ENCODE measurements at regions of chr5 and their contacts with region 1.

Region 1: GRCh38 chr5:173001229-173001841 is 17.8 kb downstream of the ATP6V0E1 start:
- DNase-seq: no peak

Region 2: GRCh38 chr5:172364773-172365172 is 636.6 kb before region 1 on chr5:
- intact Hi-C with region 1: loop called in 1 of 2 experiments (anchors 5 kb)
- DNase-seq: no peak